Heart right ventricle (tissue), 16 donors: ENCODE measurements at regions of chr1 and their contacts with region 1.

Region 1: DNA sequence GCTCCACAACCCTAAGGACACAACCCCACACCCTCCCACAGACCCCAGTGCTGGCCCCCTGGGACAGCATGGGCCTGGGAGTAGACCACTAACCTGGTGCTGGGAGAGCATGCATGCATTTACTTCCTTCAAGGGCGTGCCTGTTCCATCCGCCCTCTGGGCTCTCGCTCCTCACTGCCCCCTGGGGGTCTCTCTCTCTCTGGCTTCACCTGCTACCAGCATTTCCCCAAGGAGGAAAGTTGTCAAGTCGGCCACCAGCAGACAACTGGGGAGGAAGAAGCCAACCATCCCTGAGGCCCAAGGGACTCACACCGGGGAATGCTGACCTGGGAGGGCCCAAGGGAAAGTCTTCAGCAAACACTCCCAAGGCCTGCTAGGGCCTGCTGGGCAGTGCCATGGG is 6.5 kb downstream of the LRP8 start:
- DNase-seq: no peak
- ATAC-seq: no peak
- H3K4me3 ChIP-seq: no peak overlapping the region
- H3K27ac ChIP-seq: no peak overlapping the region
- H3K4me1 ChIP-seq: peaks cover under 1 to 24% (median 14%) of the 10 kb centered on the region in 9 donors
- H3K27me3 ChIP-seq: peaks cover 0 to 14% (median 0%) of the 10 kb centered on the region in 7 donors
- CTCF ChIP-seq: no peak

Region 2: DNA sequence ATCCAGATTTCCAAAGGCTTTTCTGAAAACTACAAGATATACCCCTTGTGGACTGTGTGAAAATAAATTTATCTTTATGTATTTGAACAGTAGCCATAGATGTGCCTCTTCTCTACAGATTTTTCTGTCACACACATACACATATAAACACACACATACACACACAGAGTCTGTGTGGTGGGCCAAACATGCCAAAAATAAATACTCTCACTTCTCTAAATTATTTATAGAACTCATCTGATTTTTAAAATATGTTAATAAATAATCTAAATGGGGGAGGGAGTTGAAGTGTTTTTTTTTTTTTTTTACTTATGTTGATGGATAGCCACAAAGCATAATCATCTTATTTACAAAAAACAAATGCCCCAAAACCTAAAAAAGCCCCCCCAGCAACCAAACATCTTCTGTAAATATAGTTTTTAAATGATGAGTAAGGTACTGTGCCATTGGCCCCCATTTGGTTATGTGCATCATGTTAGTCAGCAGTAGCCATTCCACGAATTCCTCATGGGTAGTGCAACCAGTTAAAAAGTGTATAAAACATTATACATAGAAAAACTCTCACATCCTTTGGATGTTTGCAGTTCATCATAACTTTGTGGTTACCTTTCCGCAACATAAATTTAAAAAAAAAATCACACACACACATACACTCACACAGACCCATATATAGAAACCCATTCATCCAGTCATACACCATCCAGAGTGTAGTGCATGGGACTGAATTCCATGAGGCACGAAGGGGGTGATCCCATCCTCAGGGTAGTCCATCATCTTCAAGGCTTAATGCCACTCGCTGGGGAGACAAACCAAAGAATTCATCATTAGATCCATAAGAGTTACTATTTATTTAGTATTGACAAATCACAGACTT is 74.9 kb before region 1 on chr1:
- intact Hi-C with region 1: no loop called
- DNase-seq: no peak
- ATAC-seq: no peak
- H3K4me3 ChIP-seq: no peak overlapping the region
- H3K27ac ChIP-seq: no peak overlapping the region
- H3K4me1 ChIP-seq: no peaks in the 10 kb centered on the region
- H3K27me3 ChIP-seq: no peaks in the 10 kb centered on the region
- CTCF ChIP-seq: no peak

Region 3: DNA sequence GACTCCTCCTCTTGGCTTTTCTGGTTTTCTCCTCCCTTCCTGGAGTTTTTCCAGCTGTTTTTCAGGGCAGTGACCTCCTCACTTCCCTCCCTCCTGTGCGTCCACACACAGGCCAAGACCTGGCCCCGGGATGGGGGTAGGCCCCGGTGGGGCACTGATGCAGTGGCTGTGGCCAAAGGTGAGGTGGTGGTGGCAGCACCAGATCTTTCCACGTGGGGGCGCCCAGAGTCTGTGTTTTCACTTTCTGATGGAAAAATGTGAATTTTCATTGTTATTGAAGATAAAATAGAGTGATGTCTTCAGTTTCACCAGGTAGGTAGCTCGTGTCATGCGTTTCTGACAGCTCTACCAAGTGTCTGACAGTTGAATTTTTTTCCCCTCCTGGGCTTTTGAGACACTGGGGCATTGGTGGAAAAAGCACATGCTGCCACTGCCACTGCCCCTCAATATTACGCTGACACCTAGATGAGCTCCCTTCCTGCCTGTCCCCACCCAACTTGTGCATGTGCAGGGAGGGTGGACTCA is 43.1 kb before region 1 on chr1:
- intact Hi-C with region 1: no loop called
- DNase-seq: peak; percentile 40 to 58
- ATAC-seq: peak in 7 of 8 donors; percentile 50 to 67 (median 58)
- H3K4me3 ChIP-seq: no peak overlapping the region
- H3K27ac ChIP-seq: no peak overlapping the region
- H3K4me1 ChIP-seq: no peaks in the 10 kb centered on the region
- H3K27me3 ChIP-seq: peaks cover 0 to 8% (median 0%) of the 10 kb centered on the region in 7 donors
- CTCF ChIP-seq: peak; percentile 82 to 93 (median 90)

Region 4: DNA sequence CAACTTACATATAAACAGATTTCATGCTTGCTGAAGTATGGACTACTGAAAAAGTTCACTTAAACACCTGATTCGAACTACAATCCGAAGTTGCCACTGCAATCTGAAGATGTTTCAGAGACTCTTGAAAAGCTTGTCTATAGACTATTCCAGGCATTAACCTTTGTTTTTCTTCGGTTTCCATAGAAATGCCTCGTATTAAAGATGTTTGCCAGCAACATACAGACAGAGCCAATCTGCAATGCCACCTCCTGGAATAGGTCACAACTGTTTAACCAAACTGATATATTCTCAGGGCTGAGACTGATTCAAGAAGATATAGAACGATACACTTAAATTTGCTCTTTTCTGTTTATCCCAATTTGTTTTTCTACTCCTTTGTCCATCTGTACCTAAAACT is 108.9 kb after region 1 on chr1:
- intact Hi-C with region 1: no loop called
- DNase-seq: no peak
- ATAC-seq: no peak
- H3K4me3 ChIP-seq: no peak overlapping the region
- H3K27ac ChIP-seq: no peak overlapping the region
- H3K4me1 ChIP-seq: no peaks in the 10 kb centered on the region
- H3K27me3 ChIP-seq: peaks cover 0 to 33% (median 26%) of the 10 kb centered on the region in 7 donors
- CTCF ChIP-seq: no peak

Region 5: DNA sequence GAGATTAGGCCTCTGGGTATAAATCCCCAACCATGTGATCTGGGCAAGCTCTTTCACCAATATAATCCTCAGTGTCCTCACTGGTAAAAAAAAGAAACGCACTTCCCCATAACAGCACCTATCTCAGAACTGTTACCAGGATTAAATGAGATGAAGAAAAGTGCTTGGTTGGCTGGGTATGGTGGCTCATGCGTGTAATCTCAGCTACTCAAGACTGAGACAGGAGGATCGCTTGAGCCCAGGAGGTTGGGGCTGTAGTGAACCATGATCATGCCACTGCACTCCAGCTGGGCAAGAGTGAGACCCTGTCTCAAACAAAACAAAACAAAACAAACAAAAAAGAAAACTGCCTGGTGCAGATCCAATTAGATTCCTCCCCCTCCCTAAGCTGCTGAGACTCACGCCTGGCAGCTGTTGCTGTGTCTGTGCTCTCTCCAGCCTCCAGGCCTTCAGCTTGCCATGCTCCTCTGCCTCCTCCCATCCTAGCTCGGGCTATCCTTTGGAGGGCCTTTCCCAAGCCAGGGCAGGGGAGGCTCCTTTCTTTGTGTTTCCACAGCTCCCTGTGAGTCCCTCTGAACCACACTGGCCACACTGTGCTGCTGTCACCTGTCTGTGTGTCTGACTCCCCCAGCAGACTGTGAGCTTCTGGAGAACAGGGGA is 859.5 kb after region 1 on chr1:
- intact Hi-C with region 1: loop called in 1 of 10 experiments (anchors 5 kb)
- DNase-seq: no peak
- ATAC-seq: no peak
- H3K4me3 ChIP-seq: no peak overlapping the region
- H3K27ac ChIP-seq: no peak overlapping the region
- H3K4me1 ChIP-seq: no peaks in the 10 kb centered on the region
- H3K27me3 ChIP-seq: no peaks in the 10 kb centered on the region
- CTCF ChIP-seq: no peak